Astrocyte of the cerebellum (primary cell): ENCODE measurements at regions of chr3 and their contacts with region 1.

Region 1: GRCh38 chr3:139533781-139534443 is 5.6 kb downstream of the RBP1 start:
- DNase-seq: peak; percentile 79
- H3K4me3 ChIP-seq: peak overlapping the region; percentile 23
- CTCF ChIP-seq: no peak

Region 2: GRCh38 chr3:139440639-139441556 is 93.0 kb before region 1 on chr3:
- in situ Hi-C with region 1: loop called (anchors 5 kb)
- DNase-seq: no peak
- H3K4me3 ChIP-seq: no peak overlapping the region
- CTCF ChIP-seq: no peak

Region 3: DNA sequence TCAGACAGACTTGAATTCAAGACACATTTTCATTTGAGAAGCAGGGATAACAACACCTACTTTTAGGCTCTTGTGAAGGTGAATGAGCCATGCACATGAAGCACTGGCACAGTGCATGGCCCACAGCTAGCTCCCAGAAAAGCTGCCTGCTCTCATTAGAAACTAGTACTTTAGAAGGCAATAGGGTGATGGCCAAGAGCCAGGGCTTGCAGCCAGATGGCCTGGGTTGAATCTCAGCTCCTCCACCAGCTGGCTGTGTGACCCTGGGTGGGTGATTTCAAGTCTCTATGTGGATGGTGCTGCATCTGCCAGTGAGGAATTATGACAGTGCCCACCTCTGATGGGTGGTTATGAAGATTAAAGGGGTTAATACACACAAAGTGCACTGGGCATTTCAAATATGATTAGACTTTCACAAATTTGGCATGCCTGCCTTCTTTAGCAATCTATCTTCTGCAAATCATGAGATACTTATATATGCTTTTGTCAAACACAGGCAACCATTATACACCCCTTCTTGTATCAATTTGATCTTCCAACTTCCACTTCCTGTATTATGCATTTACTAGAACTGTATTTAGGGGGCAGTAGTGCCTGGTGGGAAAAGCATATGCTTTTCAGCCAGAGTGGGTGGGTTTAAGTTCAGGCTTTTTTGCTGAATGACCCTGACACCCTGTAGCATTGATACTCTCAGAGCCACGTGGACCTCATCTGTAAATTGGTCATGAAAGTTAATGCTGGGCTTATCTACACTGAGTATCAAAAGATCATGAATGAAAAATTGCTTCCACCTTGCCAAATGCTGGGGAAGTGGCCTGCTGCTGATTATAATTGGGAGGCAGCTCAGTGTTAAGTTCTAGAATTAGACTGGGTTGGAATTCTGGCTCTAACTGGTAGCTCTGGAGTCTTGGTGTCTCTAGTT is 40.4 kb after region 1 on chr3:
- in situ Hi-C with region 1: no loop called
- DNase-seq: no peak
- H3K4me3 ChIP-seq: no peak overlapping the region
- CTCF ChIP-seq: no peak

Region 4: DNA sequence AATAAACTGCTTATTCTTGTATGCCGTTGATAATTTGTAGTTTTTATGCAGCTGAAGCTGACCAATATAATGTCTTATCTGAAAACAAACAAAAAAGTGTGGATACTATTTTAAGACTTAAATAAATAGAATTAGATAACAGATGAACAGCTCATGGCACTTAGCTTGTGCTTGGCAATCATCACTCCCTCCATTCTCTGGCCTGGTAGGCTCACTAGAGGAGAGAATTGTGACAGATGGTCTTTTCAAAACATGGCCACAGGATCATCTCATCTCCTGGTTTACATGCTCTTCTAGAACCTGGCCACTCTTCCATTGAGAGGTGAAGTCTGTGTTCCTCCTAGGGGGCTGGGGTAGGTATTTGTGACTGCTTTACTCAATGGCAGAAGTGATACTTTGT is 64.0 kb after region 1 on chr3:
- in situ Hi-C with region 1: loop called (anchors 5 kb)
- DNase-seq: no peak
- H3K4me3 ChIP-seq: no peak overlapping the region
- CTCF ChIP-seq: no peak

Region 5: DNA sequence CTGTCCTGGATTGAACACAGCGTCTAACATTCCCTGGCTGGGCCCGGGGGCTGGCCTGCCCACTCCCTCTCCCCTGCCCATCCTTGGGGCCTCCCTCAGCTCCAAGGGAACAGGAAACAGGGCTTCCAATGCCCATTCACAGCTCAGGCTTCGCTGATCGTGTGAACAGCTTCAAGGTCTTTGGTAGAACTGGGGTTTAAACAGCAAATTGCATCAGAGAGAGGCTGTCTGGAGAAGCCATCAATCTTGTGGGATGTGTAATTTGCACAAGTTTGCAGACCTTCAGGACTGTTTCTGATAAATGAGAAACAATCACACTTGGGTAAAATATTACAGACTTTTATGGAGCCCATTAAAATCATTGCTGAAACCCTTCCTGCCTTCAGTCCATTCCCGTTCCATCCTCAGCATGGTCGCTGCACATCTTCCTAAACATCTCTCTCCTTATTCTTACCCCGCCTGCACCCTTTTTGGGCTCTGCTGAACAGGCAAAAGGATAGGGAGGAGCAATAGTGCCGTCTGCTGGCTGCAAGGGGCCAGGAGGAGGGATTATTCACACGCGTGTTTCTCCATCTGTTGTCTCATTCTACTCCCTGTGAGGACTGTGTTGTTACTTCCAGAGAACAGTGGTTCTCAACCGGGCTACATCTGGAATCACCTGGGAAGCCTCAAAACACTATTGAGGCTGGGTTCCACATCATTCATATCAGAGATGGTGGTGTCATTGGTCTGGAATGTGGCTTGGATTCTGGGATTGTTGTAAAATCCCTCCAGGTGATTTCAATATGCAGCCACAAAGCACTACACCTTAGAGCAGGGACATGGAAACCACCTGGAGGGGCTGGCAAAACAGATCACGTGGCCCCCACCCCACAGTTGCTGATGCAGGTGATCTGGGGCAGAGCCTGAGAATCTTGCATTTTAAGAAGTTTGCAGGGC is 517.4 kb after region 1 on chr3:
- in situ Hi-C with region 1: no loop called
- DNase-seq: no peak
- H3K4me3 ChIP-seq: no peak overlapping the region
- CTCF ChIP-seq: peak; percentile 61